Dorsolateral prefrontal cortex (tissue), 120 donors: ENCODE measurements at regions of chr7 and their contacts with region 1.

Region 1: DNA sequence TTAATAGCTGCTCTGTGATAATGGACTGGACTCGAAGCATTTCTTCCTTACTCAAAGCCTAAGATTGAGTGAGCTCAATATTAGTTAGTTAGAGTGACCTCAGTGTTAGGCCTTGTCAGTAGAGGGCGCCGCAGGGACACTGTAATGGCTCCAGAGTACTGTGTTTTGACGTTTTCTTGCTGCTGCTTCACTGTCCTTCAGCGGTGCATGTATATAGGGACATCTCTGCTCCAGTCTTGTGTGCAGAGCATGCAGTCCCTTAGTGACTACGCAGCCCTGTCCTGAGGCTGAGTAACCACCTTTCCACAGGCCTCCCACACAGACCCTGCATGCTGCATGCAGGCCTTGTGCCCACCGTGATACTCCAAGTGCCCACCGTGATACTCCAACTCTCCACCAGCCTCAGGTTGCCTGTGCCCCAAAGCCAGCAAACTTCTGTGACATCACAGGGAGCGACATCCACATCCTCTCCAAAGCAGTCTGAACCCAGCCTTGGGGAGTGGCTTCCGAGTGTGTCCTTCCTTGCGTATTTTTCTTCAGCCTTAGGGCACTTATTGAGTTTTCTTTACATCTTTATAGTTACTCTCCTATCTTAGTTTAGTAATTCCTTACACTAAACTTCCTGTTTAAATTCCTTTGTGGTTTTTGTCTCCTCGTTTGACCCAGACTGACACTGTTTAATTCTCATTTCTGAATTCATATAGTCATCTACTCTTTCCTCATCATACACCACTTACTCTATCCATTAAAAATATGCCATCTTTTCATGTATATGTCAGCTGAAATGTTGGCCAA is 118.2 kb downstream of the JAZF1 start:
- DNase-seq: peak in 8 of 10 donors; percentile 37 to 74 (median 50)
- H3K4me3 ChIP-seq: no peak overlapping the region
- H3K27ac ChIP-seq: no peak overlapping the region
- H3K27me3 ChIP-seq: no peaks in the 10 kb centered on the region
- CTCF ChIP-seq: peak in 54 of 56 donors; percentile 29 to 76 (median 60)

Region 2: GRCh38 chr7:27961255-27961654 is 101.1 kb before region 1 on chr7:
- intact Hi-C with region 1: no loop called
- DNase-seq: peak in 3 of 10 donors; percentile 48 to 75 (median 56)
- H3K4me3 ChIP-seq: peak overlapping the region in 11 of 59 donors; percentile 1 to 45 (median 21)
- H3K27ac ChIP-seq: peak overlapping the region in 14 of 59 donors; percentile 1 to 42 (median 21)
- H3K27me3 ChIP-seq: no peaks in the 10 kb centered on the region
- CTCF ChIP-seq: no peak

Region 3: DNA sequence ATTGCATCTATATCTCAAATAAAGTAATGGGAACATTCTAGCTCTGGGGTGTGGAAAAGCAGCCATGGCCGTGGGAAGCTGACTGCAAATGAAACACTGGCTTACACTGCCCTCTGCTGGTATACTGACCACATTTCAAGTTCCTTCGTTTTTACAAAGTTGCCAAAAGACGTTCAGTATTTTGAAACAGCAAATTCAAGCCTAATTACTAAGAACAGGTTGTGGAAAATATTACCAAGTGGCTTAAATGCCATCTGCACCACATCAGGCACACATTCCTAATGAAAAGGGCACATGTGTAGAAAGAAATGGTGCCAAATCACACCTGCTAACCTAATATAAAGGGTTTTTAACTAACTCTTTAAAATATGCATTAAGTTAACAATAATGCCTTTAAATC is 34.3 kb after region 1 on chr7:
- intact Hi-C with region 1: loop called in 1 of 2 experiments (anchors 5 kb)
- DNase-seq: peak in 6 of 10 donors; percentile 44 to 74 (median 59)
- H3K4me3 ChIP-seq: no peak overlapping the region
- H3K27ac ChIP-seq: peak overlapping the region in 1 of 59 donors; percentile 9
- H3K27me3 ChIP-seq: no peaks in the 10 kb centered on the region
- CTCF ChIP-seq: peak; percentile 66 to 96 (median 89)